Uterus (tissue), 4 donors: ENCODE measurements at regions of chr12 and their contacts with region 1.

Region 1: GRCh38 chr12:51845482-51845881 is 3.0 kb downstream of the FIGNL2 start:
- DNase-seq: no peak
- H3K4me3 ChIP-seq: no peak overlapping the region
- H3K27ac ChIP-seq: no peak overlapping the region
- H3K4me1 ChIP-seq: peaks cover 0 to 8% of the 10 kb centered on the region in 2 donors
- H3K27me3 ChIP-seq: no peaks in the 10 kb centered on the region
- CTCF ChIP-seq: no peak
- POLR2A ChIP-seq: no peak

Region 2: DNA sequence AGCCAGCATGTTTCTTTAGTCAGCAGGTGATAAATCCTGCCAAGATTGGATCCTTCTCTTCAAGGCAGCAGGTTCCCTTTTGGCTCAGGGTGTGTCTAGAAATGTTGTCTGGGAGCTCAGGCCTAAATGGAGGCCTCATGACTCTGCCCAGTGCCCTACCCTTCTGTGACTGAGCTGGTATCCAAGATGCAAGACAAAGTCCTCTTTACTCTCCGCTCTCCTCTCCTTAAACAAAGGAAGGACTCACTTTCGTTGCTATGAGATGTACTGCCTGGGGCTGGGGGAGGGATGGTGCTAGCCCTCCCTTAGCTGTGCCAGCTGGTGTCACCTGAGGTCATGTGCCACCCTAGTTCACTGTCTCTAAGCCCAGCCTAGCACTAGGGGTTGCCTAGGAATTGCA is 1016.6 kb before region 1 on chr12:
- intact Hi-C with region 1: no loop called
- DNase-seq: no peak
- H3K4me3 ChIP-seq: no peak overlapping the region
- H3K27ac ChIP-seq: no peak overlapping the region
- H3K4me1 ChIP-seq: no peaks in the 10 kb centered on the region
- H3K27me3 ChIP-seq: no peaks in the 10 kb centered on the region
- CTCF ChIP-seq: no peak
- POLR2A ChIP-seq: no peak

Region 3: GRCh38 chr12:51817109-51817508 is 28.4 kb before region 1 on chr12:
- intact Hi-C with region 1: loop called (anchors 2 kb)
- DNase-seq: no peak
- H3K4me3 ChIP-seq: no peak overlapping the region
- H3K27ac ChIP-seq: no peak overlapping the region
- H3K4me1 ChIP-seq: no peaks in the 10 kb centered on the region
- H3K27me3 ChIP-seq: no peaks in the 10 kb centered on the region
- CTCF ChIP-seq: no peak
- POLR2A ChIP-seq: no peak

Region 4: DNA sequence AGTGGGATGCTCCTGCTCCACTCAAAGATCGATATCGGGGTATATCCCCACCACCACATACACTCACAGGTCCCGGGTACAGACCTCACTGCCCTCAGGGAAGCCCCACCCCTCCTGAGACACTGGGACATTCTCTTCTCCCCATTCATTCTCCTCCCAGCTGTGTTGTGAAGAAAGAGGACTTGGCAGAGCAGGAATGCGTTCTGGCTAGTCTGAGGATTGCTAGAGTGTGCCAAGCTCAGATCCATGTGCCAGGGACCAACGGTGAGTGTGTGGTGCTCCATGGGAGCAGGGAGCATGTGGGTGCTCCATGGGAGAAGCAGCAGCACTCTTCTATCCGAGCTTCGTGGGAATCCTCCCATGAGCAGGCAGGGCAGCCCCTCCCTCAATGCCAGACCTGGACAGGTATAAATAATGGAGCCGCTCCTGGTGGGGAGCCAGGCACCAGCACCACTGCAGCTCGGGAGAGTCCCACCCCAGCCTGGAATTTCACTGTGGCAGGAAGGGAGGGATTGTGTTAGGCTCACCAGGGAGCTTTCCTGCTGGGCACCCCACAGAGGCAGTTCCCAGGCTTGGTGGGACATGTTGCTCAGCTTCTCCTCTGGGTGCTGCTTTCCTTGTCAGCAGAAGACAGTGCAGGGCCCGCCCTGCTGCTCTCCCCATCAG is 677.0 kb after region 1 on chr12:
- intact Hi-C with region 1: no loop called
- DNase-seq: no peak
- H3K4me3 ChIP-seq: no peak overlapping the region
- H3K27ac ChIP-seq: no peak overlapping the region
- H3K4me1 ChIP-seq: no peaks in the 10 kb centered on the region
- H3K27me3 ChIP-seq: no peaks in the 10 kb centered on the region
- CTCF ChIP-seq: no peak
- POLR2A ChIP-seq: no peak